ENCODE measurements at regions of chr7 and their contacts with region 1.

Region 1: DNA sequence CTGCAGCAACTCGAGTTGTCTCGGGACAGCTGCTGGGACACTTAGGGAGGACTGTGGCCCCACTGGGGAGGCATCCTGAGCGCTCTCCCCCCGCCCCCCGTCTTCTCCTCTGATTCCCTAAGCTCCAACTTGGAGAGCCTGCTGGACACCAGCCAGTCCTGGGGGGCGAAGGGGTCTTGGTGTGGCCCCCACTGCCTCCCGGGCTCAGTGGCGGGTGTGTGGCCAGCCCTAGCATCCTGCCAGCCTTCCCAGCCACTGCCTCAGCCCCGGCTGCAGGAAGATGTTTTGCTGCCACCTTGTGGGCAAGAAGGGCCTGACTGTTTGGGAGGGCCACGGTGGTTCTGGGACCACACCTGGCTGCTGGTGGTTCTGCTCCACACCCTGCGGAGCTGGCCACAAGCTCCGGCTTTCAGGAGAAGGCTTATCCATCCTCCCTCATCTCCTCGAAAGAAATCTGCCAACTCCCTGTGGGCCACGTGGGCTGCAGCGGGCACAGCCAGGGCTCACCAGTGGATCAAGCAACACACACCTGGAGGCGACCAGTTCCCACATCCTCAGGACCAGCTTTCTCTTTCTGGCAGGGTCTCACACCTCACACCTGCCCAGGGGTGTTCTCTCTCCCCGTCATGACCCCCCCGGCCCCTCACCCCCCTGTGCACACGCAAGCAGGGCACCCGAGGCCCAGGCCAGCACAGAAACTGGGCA is 24.8 kb downstream of the AGAP3 start:
- DNase-seq: peak; percentile 54 to 84 (median 78)
- ATAC-seq: peak; percentile 80
- H3K4me3 ChIP-seq: no peak overlapping the region
- H3K4me3 Mint-ChIP-seq: no peak overlapping the region
- H3K27ac ChIP-seq: no peak overlapping the region
- H3K27ac Mint-ChIP-seq: no peak overlapping the region
- H3K4me1 ChIP-seq: no peaks in the 10 kb centered on the region
- H3K4me1 Mint-ChIP-seq: peaks cover 6% of the 10 kb centered on the region
- H3K27me3 ChIP-seq: peaks cover 2 to 8% of the 10 kb centered on the region in 2 experiments
- H3K27me3 Mint-ChIP-seq: peaks cover 9% of the 10 kb centered on the region
- CTCF ChIP-seq: peak; percentile 75

Region 2: GRCh38 chr7:150962553-150963399 is 148.3 kb before region 1 on chr7:
- CTCF ChIA-PET with region 1: interaction called, 88 read pairs
- POLR2A ChIA-PET with region 1: no interaction called
- intact Hi-C with region 1: loop called in 1 of 2 experiments (anchors 1 kb)
- DNase-seq: peak in 8 of 9 experiments; percentile 40 to 76 (median 66)
- ATAC-seq: peak; percentile 96
- H3K4me3 ChIP-seq: no peak overlapping the region
- H3K4me3 Mint-ChIP-seq: no peak overlapping the region
- H3K27ac ChIP-seq: no peak overlapping the region
- H3K27ac Mint-ChIP-seq: no peak overlapping the region
- H3K4me1 ChIP-seq: peaks cover 5% of the 10 kb centered on the region
- H3K4me1 Mint-ChIP-seq: peaks cover 6% of the 10 kb centered on the region
- H3K27me3 ChIP-seq: peaks cover 6 to 9% of the 10 kb centered on the region in 2 experiments
- H3K27me3 Mint-ChIP-seq: peaks cover 24% of the 10 kb centered on the region
- CTCF ChIP-seq: peak; percentile 86

Region 3: GRCh38 chr7:151017953-151018420 is 93.1 kb before region 1 on chr7:
- CTCF ChIA-PET with region 1: interaction called, 36 read pairs
- POLR2A ChIA-PET with region 1: interaction called, 3 read pairs
- intact Hi-C with region 1: no loop called
- DNase-seq: peak; percentile 70 to 90 (median 83)
- ATAC-seq: peak; percentile 60
- H3K4me3 ChIP-seq: peak overlapping the region; percentile 40 to 54
- H3K4me3 Mint-ChIP-seq: peak overlapping the region; percentile 83
- H3K27ac ChIP-seq: peak overlapping the region in 1 of 2 experiments; percentile 27
- H3K27ac Mint-ChIP-seq: peak overlapping the region; percentile 39
- H3K4me1 ChIP-seq: peaks cover 61% of the 10 kb centered on the region
- H3K4me1 Mint-ChIP-seq: peaks cover 57% of the 10 kb centered on the region
- H3K27me3 ChIP-seq: peaks cover 0 to 16% of the 10 kb centered on the region in 2 experiments
- H3K27me3 Mint-ChIP-seq: peaks cover 7% of the 10 kb centered on the region
- CTCF ChIP-seq: peak; percentile 99

Region 4: GRCh38 chr7:151080522-151081169 is 30.4 kb before region 1 on chr7 and contains the start of gene FASTK:
- CTCF ChIA-PET with region 1: interaction called, 7 read pairs
- POLR2A ChIA-PET with region 1: interaction called, 3 read pairs
- intact Hi-C with region 1: loop called in 1 of 2 experiments (anchors 5 kb)
- DNase-seq: peak; percentile 71 to 95 (median 87)
- ATAC-seq: peak; percentile 65
- H3K4me3 ChIP-seq: peak within 1 kb of the TSS; percentile 74 to 95
- H3K4me3 Mint-ChIP-seq: peak within 1 kb of the TSS; percentile 85
- H3K27ac ChIP-seq: peak within 1 kb of the TSS; percentile 74 to 91
- H3K27ac Mint-ChIP-seq: peak within 1 kb of the TSS; percentile 85
- H3K4me1 ChIP-seq: peaks cover 57% of the 10 kb centered on the region
- H3K4me1 Mint-ChIP-seq: peaks cover 45% of the 10 kb centered on the region
- H3K27me3 ChIP-seq: no peaks in the 10 kb centered on the region
- H3K27me3 Mint-ChIP-seq: peaks cover 10% of the 10 kb centered on the region
- CTCF ChIP-seq: no peak
- total RNA-seq, gene FASTK: 56.3 to 62.9 TPM

Region 5: DNA sequence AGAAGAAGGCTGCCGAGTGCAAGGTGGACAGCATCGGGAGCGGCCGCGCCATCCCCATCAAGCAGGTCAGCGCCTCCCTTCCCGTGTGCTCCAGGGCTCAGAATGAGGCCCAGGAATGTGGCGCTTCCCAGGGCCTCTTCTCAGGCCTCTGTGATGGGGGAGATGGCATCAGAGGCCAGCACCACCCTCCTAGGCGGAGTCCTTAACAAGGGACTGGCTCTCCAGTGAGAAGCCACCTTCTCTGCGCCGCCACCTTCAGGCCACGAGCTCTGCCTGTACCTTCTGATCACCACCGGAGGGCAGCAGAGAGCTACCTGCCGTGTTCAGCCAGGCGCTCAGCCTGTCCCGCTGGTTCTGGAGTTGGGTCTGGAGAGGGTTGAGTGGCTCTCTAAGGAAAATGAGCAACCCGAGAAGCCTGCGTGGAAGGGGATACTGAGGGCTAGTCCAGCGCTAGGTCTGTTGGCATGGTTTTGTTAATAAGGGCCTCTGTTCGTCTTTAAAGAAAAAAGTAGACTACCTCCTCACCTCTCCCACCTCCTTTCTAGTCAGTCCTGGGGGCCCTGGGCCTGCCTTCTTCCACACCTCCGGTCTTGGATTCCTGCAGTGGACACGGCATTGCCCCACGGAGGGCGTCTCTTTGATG is 12.8 kb after region 1 on chr7:
- CTCF ChIA-PET with region 1: interaction called, 26 read pairs
- POLR2A ChIA-PET with region 1: no interaction called
- intact Hi-C with region 1: no loop called
- DNase-seq: peak; percentile 69 to 88 (median 81)
- ATAC-seq: peak; percentile 99
- H3K4me3 ChIP-seq: no peak overlapping the region
- H3K4me3 Mint-ChIP-seq: no peak overlapping the region
- H3K27ac ChIP-seq: no peak overlapping the region
- H3K27ac Mint-ChIP-seq: no peak overlapping the region
- H3K4me1 ChIP-seq: no peaks in the 10 kb centered on the region
- H3K4me1 Mint-ChIP-seq: no peaks in the 10 kb centered on the region
- H3K27me3 ChIP-seq: no peaks in the 10 kb centered on the region
- H3K27me3 Mint-ChIP-seq: peaks cover 2% of the 10 kb centered on the region
- CTCF ChIP-seq: peak; percentile 93

Measured in CD8-positive, alpha-beta T cell (primary cell).